CD8-positive, alpha-beta T cell (primary cell): ENCODE measurements at regions of chr17 and their contacts with region 1.

Region 1: GRCh38 chr17:73132085-73132492 is 32.7 kb upstream of the SSTR2 start:
- DNase-seq: no peak
- ATAC-seq: no peak
- H3K4me3 ChIP-seq: no peak overlapping the region
- H3K4me3 Mint-ChIP-seq: no peak overlapping the region
- H3K27ac ChIP-seq: no peak overlapping the region
- H3K27ac Mint-ChIP-seq: no peak overlapping the region
- H3K4me1 ChIP-seq: no peaks in the 10 kb centered on the region
- H3K4me1 Mint-ChIP-seq: no peaks in the 10 kb centered on the region
- H3K27me3 ChIP-seq: no peaks in the 10 kb centered on the region
- H3K27me3 Mint-ChIP-seq: no peaks in the 10 kb centered on the region
- CTCF ChIP-seq: no peak

Region 2: GRCh38 chr17:73074566-73074965 is 57.5 kb before region 1 on chr17:
- CTCF ChIA-PET with region 1: no interaction called
- POLR2A ChIA-PET with region 1: no interaction called
- intact Hi-C with region 1: loop called in 1 of 2 experiments (anchors 2 kb)
- DNase-seq: no peak
- ATAC-seq: no peak
- H3K4me3 ChIP-seq: no peak overlapping the region
- H3K4me3 Mint-ChIP-seq: no peak overlapping the region
- H3K27ac ChIP-seq: no peak overlapping the region
- H3K27ac Mint-ChIP-seq: no peak overlapping the region
- H3K4me1 ChIP-seq: no peaks in the 10 kb centered on the region
- H3K4me1 Mint-ChIP-seq: no peaks in the 10 kb centered on the region
- H3K27me3 ChIP-seq: no peaks in the 10 kb centered on the region
- H3K27me3 Mint-ChIP-seq: no peaks in the 10 kb centered on the region
- CTCF ChIP-seq: no peak